GM13977 (cell line): ENCODE measurements at regions of chr15 and their contacts with region 1.

Region 1: GRCh38 chr15:52805351-52806283 is 15.5 kb upstream of the ONECUT1 start:
- DNase-seq: peak; percentile 31
- CTCF ChIP-seq: no peak

Region 2: GRCh38 chr15:53203454-53203853 is 397.8 kb after region 1 on chr15:
- in situ Hi-C with region 1: loop called (anchors 25 kb)
- DNase-seq: no peak
- CTCF ChIP-seq: no peak